ENCODE measurements at regions of chr10 and their contacts with region 1.

Region 1: DNA sequence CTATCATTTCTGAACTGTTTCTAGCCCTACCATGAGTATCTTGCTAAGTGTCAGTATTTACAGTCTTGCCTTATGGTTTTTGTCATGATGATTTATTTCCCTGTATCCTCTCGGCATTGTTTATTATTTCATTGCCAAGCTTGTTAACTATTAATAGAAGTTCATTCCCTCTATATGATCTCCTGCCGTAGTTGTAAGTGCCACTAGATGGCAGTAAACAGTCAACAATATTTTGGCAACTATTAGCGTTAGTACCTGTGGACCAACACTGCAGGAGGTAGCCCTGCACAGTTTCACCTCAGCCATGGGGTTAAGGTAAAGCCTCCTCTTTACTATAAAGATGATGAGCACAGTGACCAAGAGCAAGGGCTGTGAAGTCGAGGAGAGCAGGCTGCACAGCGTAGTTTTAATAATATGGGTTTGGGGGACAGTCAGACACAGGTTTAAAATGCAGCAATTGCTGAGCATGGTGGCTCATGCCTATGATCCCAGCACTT is 26.1 kb upstream of the CCNJ start:
- DNase-seq: peak in 7 of 9 donors; percentile 17 to 57 (median 53)
- ATAC-seq: peak; percentile 90
- H3K4me3 ChIP-seq: no peak overlapping the region
- H3K4me3 Mint-ChIP-seq: no peak overlapping the region
- H3K27ac ChIP-seq: no peak overlapping the region
- H3K27ac Mint-ChIP-seq: no peak overlapping the region
- H3K4me1 ChIP-seq: no peaks in the 10 kb centered on the region
- H3K4me1 Mint-ChIP-seq: peaks cover 0 to 5% (median 3%) of the 10 kb centered on the region in 7 donors
- H3K27me3 ChIP-seq: peaks cover 0 to 5% of the 10 kb centered on the region in 2 donors
- H3K27me3 Mint-ChIP-seq: peaks cover 8 to 23% (median 14%) of the 10 kb centered on the region in 5 donors

Region 2: DNA sequence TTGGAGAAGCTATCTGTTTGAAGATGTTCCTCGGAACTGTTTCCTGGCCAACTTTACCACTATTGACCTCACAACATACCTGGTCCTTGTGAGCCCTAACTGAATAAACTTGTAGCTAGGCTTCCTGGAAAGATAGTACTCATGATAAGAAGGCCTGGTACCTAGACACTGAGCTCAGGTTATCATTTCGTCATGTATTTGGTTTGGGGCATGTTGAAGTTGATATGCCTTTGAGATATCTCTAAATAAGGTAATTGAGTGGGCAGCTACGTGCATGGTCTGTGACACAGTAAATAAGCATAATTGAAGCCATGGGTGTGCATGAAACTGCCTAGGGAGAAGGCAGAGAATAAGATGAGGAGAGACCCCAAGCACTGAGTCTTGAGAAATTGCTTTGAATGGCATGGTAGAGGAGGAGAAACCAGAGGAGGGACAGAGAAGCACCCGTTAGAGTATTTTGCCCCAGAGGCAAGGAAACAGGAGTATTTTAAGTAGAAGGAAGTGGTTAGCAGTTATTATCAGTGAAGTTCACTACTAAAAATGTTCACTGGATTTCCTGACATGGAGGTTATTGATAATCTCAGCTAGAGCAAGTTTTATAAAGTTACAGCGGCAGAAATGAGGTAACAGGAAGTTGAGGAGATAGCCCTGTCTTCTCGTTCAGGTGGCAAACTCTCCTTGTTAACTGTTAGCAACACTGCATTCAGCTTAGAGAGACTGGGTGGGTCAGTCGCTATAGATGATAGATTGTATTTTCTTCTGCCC is 53.8 kb before region 1 on chr10:
- CTCF ChIA-PET with region 1: no interaction called
- POLR2A ChIA-PET with region 1: no interaction called
- intact Hi-C with region 1: no loop called
- DNase-seq: peak in 6 of 9 donors; percentile 13 to 35 (median 32)
- ATAC-seq: peak; percentile 54
- H3K4me3 ChIP-seq: peak overlapping the region; percentile 12
- H3K4me3 Mint-ChIP-seq: peak overlapping the region; percentile 17 to 71 (median 62)
- H3K27ac ChIP-seq: peak overlapping the region; percentile 26
- H3K27ac Mint-ChIP-seq: peak overlapping the region; percentile 48 to 84 (median 64)
- H3K4me1 ChIP-seq: peaks cover 5 to 14% of the 10 kb centered on the region in 2 donors
- H3K4me1 Mint-ChIP-seq: peaks cover 9 to 30% (median 27%) of the 10 kb centered on the region in 7 donors
- H3K27me3 ChIP-seq: no peaks in the 10 kb centered on the region
- H3K27me3 Mint-ChIP-seq: peaks cover 0 to 7% (median 0%) of the 10 kb centered on the region in 5 donors

Region 3: GRCh38 chr10:96043033-96043932 is 26.0 kb after region 1 on chr10 and contains the start of gene CCNJ:
- CTCF ChIA-PET with region 1: interaction called, 5 read pairs
- POLR2A ChIA-PET with region 1: no interaction called
- intact Hi-C with region 1: loop called in 1 of 2 experiments (anchors 1 kb)
- DNase-seq: peak; percentile 76 to 87 (median 83)
- ATAC-seq: peak; percentile 91
- H3K4me3 ChIP-seq: peak within 1 kb of the TSS; percentile 78
- H3K4me3 Mint-ChIP-seq: peak within 1 kb of the TSS; percentile 83 to 96 (median 92)
- H3K27ac ChIP-seq: peak within 1 kb of the TSS; percentile 81
- H3K27ac Mint-ChIP-seq: peak within 1 kb of the TSS; percentile 80 to 96 (median 87)
- H3K4me1 ChIP-seq: peaks cover 13 to 16% of the 10 kb centered on the region in 2 donors
- H3K4me1 Mint-ChIP-seq: peaks cover 32 to 50% (median 44%) of the 10 kb centered on the region in 7 donors
- H3K27me3 ChIP-seq: peaks cover 3 to 4% of the 10 kb centered on the region in 2 donors
- H3K27me3 Mint-ChIP-seq: peaks cover 4 to 11% (median 8%) of the 10 kb centered on the region in 5 donors
- total RNA-seq, gene CCNJ: 5.6 to 8.0 (median 6.7) TPM

Region 4: GRCh38 chr10:96089670-96090462 is 72.6 kb after region 1 on chr10:
- CTCF ChIA-PET with region 1: no interaction called
- POLR2A ChIA-PET with region 1: no interaction called
- intact Hi-C with region 1: loop called in 1 of 2 experiments (anchors 2 kb)
- DNase-seq: peak; percentile 87 to 94 (median 92)
- ATAC-seq: peak; percentile 94
- H3K4me3 ChIP-seq: peak overlapping the region; percentile 99
- H3K4me3 Mint-ChIP-seq: peak overlapping the region; percentile 87 to 98 (median 94)
- H3K27ac ChIP-seq: peak overlapping the region; percentile 93
- H3K27ac Mint-ChIP-seq: peak overlapping the region; percentile 96 to 99 (median 99)
- H3K4me1 ChIP-seq: peaks cover 4 to 8% of the 10 kb centered on the region in 2 donors
- H3K4me1 Mint-ChIP-seq: peaks cover 0 to 15% (median 14%) of the 10 kb centered on the region in 7 donors
- H3K27me3 ChIP-seq: peaks cover 3 to 4% of the 10 kb centered on the region in 2 donors
- H3K27me3 Mint-ChIP-seq: peaks cover 29 to 36% (median 30%) of the 10 kb centered on the region in 5 donors

Region 5: GRCh38 chr10:96229568-96230030 is 212.4 kb after region 1 on chr10:
- CTCF ChIA-PET with region 1: interaction called, 6 read pairs
- POLR2A ChIA-PET with region 1: no interaction called
- intact Hi-C with region 1: loop called (anchors 5 kb)
- DNase-seq: peak; percentile 59 to 80 (median 68)
- ATAC-seq: peak; percentile 97
- H3K4me3 ChIP-seq: no peak overlapping the region
- H3K4me3 Mint-ChIP-seq: peak overlapping the region in 3 of 10 donors; percentile 12 to 56 (median 39)
- H3K27ac ChIP-seq: no peak overlapping the region
- H3K27ac Mint-ChIP-seq: peak overlapping the region in 8 of 9 donors; percentile 9 to 87 (median 58)
- H3K4me1 ChIP-seq: no peaks in the 10 kb centered on the region
- H3K4me1 Mint-ChIP-seq: peaks cover 0 to 5% (median 0%) of the 10 kb centered on the region in 7 donors
- H3K27me3 ChIP-seq: no peaks in the 10 kb centered on the region
- H3K27me3 Mint-ChIP-seq: peaks cover 0 to 2% (median 0%) of the 10 kb centered on the region in 5 donors

Region 6: DNA sequence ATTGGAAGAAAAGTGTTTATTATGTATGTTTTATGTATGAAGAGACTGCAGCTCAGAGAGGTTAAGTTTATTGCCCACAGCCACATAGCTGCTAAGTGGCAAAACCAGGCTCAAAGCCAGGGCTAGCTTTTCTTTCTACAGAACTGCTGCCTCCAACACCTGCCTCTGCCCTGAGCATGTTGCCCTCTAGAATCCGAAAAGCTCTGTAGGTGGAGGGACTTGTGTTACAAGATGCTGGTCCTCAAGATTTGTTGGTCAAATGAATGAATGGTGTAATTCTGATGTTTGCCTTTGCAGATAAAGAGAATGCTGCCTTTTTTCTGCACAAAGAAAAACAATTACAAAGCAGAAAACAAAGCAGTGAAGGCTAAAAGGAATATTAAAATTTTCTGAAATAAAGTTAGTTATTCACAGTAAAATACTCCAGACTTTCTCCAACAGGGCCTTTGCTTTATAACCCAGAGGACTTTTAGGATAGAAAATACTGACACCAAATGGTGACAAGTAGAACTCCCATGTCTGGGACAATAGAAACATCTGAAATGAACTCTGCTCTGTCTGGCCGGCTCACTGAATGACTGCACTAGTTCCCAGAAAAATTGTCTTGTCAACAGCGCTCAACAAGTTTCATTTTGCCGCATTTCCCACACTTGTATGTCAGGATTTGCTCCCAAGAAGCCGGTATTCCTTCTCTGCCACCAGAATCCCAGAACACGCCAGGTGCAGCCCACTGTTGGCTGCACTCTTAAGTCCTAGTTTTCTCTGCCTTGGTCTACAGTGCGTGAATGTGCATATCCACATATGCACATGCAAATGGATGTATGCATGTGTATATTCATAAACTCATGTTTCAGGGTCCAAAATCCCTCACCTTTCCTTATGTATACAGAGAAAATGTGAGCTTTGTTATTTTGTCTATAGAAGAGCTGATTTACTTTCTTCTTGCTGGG is 276.0 kb after region 1 on chr10:
- CTCF ChIA-PET with region 1: interaction called, 28 read pairs
- POLR2A ChIA-PET with region 1: no interaction called
- intact Hi-C with region 1: loop called (anchors 1 kb)
- DNase-seq: peak in 6 of 9 donors; percentile 11 to 54 (median 44)
- ATAC-seq: peak; percentile 70
- H3K4me3 ChIP-seq: no peak overlapping the region
- H3K4me3 Mint-ChIP-seq: peak overlapping the region in 1 of 10 donors; percentile 2
- H3K27ac ChIP-seq: no peak overlapping the region
- H3K27ac Mint-ChIP-seq: peak overlapping the region in 5 of 9 donors; percentile 9 to 89 (median 42)
- H3K4me1 ChIP-seq: peaks cover 0 to 25% of the 10 kb centered on the region in 2 donors
- H3K4me1 Mint-ChIP-seq: peaks cover 8 to 54% (median 43%) of the 10 kb centered on the region in 7 donors
- H3K27me3 ChIP-seq: no peaks in the 10 kb centered on the region
- H3K27me3 Mint-ChIP-seq: peaks cover 0 to 3% (median 0%) of the 10 kb centered on the region in 5 donors

Region 7: DNA sequence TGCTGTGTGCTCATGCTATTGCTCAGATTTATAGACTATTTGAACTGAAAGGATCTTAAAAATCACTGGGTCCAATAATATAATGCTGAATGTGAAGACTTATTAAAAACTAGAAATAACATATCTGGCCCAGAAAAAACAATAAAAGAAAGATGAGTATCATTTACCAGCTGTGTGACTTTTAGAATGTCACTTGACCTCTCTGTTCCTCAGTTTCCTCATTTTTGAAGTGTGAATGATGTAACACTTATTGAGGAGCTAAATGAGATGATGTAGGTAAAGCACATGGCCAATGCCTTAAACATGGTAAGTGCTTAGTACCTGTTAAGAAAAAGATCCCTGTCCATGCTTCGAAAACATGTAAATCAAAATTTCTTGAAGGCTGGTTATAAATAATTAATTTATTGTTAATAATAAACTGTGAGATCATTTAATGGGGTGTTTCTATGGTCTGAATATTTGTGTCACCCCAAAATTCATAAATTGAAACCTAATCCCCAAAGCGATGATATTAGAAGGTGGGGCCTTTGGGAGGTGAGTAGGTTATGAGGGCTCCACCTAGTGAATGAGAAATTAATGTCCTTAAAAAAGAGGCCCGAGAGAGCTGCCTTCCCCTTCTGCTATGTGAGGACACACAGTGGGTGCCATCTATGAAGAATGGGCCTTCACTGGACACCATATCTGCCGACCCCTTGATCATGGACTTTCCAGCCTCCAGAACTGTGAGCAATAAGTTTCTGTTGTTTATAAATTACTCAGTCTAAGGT is 300.0 kb after region 1 on chr10:
- CTCF ChIA-PET with region 1: interaction called, 3 read pairs
- POLR2A ChIA-PET with region 1: no interaction called
- intact Hi-C with region 1: loop called in 1 of 2 experiments (anchors 1 kb)
- DNase-seq: peak in 1 of 9 donors; percentile 25
- ATAC-seq: no peak
- H3K4me3 ChIP-seq: no peak overlapping the region
- H3K4me3 Mint-ChIP-seq: no peak overlapping the region
- H3K27ac ChIP-seq: no peak overlapping the region
- H3K27ac Mint-ChIP-seq: peak overlapping the region in 1 of 9 donors; percentile 48
- H3K4me1 ChIP-seq: no peaks in the 10 kb centered on the region
- H3K4me1 Mint-ChIP-seq: peaks cover 0 to 17% (median 7%) of the 10 kb centered on the region in 7 donors
- H3K27me3 ChIP-seq: no peaks in the 10 kb centered on the region
- H3K27me3 Mint-ChIP-seq: peaks cover 0 to 18% (median 14%) of the 10 kb centered on the region in 5 donors

Region 8: DNA sequence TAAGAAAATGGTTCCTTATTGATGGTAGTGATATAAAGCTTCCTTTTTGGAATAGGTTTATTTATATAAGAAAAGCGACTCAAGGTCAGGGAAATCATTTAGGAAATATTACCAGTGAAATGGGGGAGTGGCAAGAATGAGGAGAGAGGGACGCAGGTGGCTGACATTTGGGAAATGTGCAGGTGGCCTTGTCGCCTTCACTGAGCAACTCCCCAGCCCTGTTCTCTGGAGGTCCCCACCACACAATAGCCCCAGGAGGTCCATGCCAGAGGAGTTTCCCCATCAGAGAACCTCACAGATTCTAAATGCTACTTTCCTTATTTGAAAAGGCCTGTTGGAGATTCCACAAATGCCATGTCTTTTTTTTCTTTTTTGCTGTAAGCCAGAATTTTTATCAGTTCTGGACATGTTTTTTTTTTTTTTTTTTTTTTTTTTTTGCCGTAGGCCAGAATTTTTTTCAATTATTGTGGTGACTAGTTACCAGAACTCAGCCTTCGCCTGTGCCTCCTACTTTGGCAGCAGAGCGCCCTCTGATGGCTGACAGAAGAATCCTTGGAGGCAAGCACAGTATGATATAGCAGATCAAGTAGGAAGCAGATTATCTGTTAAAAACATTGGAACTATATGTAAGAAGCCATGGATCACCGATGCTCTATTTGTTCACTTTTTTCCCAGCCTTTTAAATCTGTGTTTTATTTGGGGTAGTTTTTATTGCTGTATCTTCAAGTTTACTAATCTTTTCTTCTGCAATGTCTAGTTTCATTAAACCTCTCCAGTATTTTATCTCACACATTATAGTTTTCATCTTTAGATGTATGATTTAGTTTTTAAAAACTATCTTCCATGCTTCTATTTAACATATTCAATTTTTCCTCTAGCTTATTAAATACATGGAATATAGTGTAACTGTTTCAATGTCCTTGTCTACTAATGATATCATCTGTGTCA is 323.0 kb after region 1 on chr10:
- CTCF ChIA-PET with region 1: interaction called, 9 read pairs
- POLR2A ChIA-PET with region 1: no interaction called
- intact Hi-C with region 1: loop called (anchors 1 kb)
- DNase-seq: peak in 8 of 9 donors; percentile 32 to 73 (median 66)
- ATAC-seq: peak; percentile 88
- H3K4me3 ChIP-seq: no peak overlapping the region
- H3K4me3 Mint-ChIP-seq: peak overlapping the region in 1 of 10 donors; percentile 20
- H3K27ac ChIP-seq: no peak overlapping the region
- H3K27ac Mint-ChIP-seq: peak overlapping the region in 2 of 9 donors; percentile 8 to 53
- H3K4me1 ChIP-seq: no peaks in the 10 kb centered on the region
- H3K4me1 Mint-ChIP-seq: peaks cover 0 to 11% (median 2%) of the 10 kb centered on the region in 7 donors
- H3K27me3 ChIP-seq: no peaks in the 10 kb centered on the region
- H3K27me3 Mint-ChIP-seq: peaks cover 0 to 10% (median 0%) of the 10 kb centered on the region in 5 donors